T-cell (primary cell): ENCODE measurements at regions of chr4 and their contacts with region 1.

Region 1: GRCh38 chr4:102565696-102566095 is 64.5 kb downstream of the NFKB1 start:
- DNase-seq: no peak
- ATAC-seq: no peak
- H3K4me3 ChIP-seq: no peak overlapping the region
- H3K4me3 Mint-ChIP-seq: no peak overlapping the region
- H3K27ac ChIP-seq: no peak overlapping the region
- H3K27ac Mint-ChIP-seq: peak overlapping the region; percentile 64 to 79
- H3K4me1 ChIP-seq: peaks cover 0 to 2% of the 10 kb centered on the region in 2 experiments
- H3K4me1 Mint-ChIP-seq: peaks cover 69 to 74% (median 71%) of the 10 kb centered on the region in 3 donors
- H3K27me3 ChIP-seq: no peaks in the 10 kb centered on the region
- H3K27me3 Mint-ChIP-seq: no peaks in the 10 kb centered on the region

Region 2: DNA sequence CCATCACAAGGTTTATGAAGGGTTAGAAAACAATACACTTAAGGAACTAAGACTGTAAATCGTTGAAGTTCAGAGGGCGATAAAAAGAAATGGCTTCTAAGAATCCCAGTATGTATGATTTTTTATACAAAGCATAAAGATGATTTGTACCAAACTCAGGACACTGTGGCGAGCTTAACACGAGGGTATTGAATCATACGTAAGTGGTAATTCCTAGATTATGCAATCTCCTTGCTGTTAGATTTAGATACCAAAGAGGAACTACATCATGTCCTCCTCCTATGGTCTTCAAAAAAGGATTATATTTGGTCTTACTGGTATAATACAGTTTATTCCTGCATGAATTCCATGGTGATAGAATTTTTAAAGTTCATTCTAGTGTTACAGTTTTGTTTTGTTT is 40.6 kb before region 1 on chr4:
- CTCF ChIA-PET with region 1: no interaction called
- POLR2A ChIA-PET with region 1: interaction called, 7 to 15 read pairs
- DNase-seq: no peak
- ATAC-seq: no peak
- H3K4me3 ChIP-seq: no peak overlapping the region
- H3K4me3 Mint-ChIP-seq: no peak overlapping the region
- H3K27ac ChIP-seq: no peak overlapping the region
- H3K27ac Mint-ChIP-seq: peak overlapping the region; percentile 56 to 84
- H3K4me1 ChIP-seq: peaks cover 16 to 32% of the 10 kb centered on the region in 2 experiments
- H3K4me1 Mint-ChIP-seq: peaks cover 87 to 92% (median 88%) of the 10 kb centered on the region in 3 donors
- H3K27me3 ChIP-seq: no peaks in the 10 kb centered on the region
- H3K27me3 Mint-ChIP-seq: no peaks in the 10 kb centered on the region

Region 3: DNA sequence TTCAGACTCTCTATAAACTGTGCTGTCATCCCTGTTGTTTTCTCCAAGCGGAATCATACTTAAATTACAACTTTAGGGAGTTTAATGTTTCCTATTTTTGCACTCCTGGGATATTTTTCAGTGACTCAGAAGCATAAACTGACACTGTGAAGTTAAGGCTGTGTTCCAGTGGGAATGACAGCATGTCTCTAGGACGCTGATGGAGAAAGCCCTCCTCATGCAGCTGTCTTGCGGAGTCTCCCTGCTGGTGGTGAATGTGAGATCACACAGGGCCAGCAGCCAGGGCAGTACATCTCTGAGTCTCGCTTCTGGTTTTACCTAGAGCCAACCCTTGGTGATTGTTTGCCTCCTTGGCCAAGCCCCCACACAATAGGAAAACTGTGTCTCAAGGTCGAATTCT is 11.2 kb before region 1 on chr4:
- CTCF ChIA-PET with region 1: interaction called in 1 of 2 experiments, 5 read pairs
- POLR2A ChIA-PET with region 1: interaction called in 1 of 2 experiments, 13 read pairs
- DNase-seq: no peak
- ATAC-seq: no peak
- H3K4me3 ChIP-seq: no peak overlapping the region
- H3K4me3 Mint-ChIP-seq: no peak overlapping the region
- H3K27ac ChIP-seq: no peak overlapping the region
- H3K27ac Mint-ChIP-seq: peak overlapping the region; percentile 5 to 52
- H3K4me1 ChIP-seq: peaks cover 15 to 16% of the 10 kb centered on the region in 2 experiments
- H3K4me1 Mint-ChIP-seq: peaks cover 42 to 57% (median 50%) of the 10 kb centered on the region in 3 donors
- H3K27me3 ChIP-seq: no peaks in the 10 kb centered on the region
- H3K27me3 Mint-ChIP-seq: no peaks in the 10 kb centered on the region

Region 4: DNA sequence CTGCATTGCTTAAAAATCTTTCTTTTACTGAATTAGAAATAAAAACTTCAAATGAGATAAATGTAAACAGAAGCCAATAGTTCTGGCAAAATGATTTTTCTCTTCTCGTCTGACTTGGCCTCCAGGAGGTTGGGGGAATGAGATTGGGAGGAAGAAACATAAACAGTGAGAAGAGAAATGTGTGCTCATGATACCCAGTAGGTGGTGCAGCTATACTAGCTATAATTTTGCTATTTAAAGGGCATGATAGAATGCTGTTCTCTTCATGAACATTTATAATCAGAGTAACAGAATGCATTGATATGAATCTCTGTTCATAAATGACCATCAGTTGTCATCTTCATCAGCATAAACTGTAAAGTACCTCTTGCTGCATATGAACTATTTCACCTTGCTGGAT is 1068.5 kb after region 1 on chr4:
- CTCF ChIA-PET with region 1: no interaction called
- POLR2A ChIA-PET with region 1: no interaction called
- DNase-seq: no peak
- ATAC-seq: no peak
- H3K4me3 ChIP-seq: no peak overlapping the region
- H3K4me3 Mint-ChIP-seq: no peak overlapping the region
- H3K27ac ChIP-seq: no peak overlapping the region
- H3K27ac Mint-ChIP-seq: no peak overlapping the region
- H3K4me1 ChIP-seq: no peaks in the 10 kb centered on the region
- H3K4me1 Mint-ChIP-seq: no peaks in the 10 kb centered on the region
- H3K27me3 ChIP-seq: no peaks in the 10 kb centered on the region
- H3K27me3 Mint-ChIP-seq: no peaks in the 10 kb centered on the region